Activated CD4-positive, alpha-beta T cell treated with anti-CD3 and anti-CD28 coated beads for 36 hours (primary cell): ENCODE measurements at regions of chr12 and their contacts with region 1.

Region 1: DNA sequence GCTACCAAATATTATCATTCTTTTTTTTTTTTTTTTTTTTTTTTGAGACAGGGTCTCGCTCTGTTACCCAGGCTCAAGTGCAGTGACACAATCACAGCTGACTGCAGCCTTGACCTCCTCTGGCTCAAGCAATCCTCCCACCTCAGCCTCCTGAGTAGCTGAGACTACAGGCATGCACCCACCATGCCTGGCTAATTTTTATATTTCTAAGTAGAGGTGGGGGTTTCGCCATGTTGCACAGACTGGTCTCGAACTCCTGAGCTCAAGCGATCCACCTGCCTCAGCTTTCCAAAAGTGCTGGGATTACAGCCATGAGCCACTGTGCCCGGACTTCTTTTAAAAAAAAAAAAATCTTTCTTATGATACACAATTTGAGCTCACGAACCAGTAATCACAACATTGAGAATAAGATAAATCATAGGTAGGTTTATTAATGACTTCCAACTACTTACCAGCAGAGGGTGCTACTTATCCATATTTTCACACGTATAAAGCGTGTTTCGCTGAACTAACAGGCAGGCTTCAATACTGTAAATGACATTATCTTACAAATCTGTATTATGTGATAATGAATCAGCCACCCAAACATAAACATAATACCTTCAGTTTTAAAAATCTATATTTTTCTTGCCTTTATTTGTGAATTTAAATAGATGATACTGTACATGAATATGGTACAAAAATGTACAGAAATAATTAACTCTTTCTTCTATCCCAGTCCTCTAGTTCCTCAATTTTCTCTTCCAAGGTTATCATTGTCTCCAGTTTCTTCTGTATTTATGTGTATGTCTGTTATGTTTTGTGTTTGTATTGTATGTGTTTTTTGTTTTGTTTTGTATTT is 42.5 kb upstream of the BCAT1 start:
- DNase-seq: no peak
- ATAC-seq: peak; percentile 85
- H3K4me3 Mint-ChIP-seq: no peak overlapping the region
- H3K27ac Mint-ChIP-seq: no peak overlapping the region
- H3K4me1 Mint-ChIP-seq: no peaks in the 10 kb centered on the region
- H3K27me3 Mint-ChIP-seq: no peaks in the 10 kb centered on the region

Region 2: GRCh38 chr12:24798335-24798734 is 193.1 kb before region 1 on chr12:
- CTCF ChIA-PET with region 1: no interaction called
- POLR2A ChIA-PET with region 1: no interaction called
- intact Hi-C with region 1: no loop called
- DNase-seq: no peak
- ATAC-seq: peak; percentile 27
- H3K4me3 Mint-ChIP-seq: no peak overlapping the region
- H3K27ac Mint-ChIP-seq: no peak overlapping the region
- H3K4me1 Mint-ChIP-seq: peaks cover 22% of the 10 kb centered on the region
- H3K27me3 Mint-ChIP-seq: no peaks in the 10 kb centered on the region

Region 3: GRCh38 chr12:25009496-25010092 is 18.2 kb after region 1 on chr12:
- CTCF ChIA-PET with region 1: interaction called, 10 read pairs
- POLR2A ChIA-PET with region 1: no interaction called
- intact Hi-C with region 1: no loop called
- DNase-seq: no peak
- ATAC-seq: no peak
- H3K4me3 Mint-ChIP-seq: no peak overlapping the region
- H3K27ac Mint-ChIP-seq: no peak overlapping the region
- H3K4me1 Mint-ChIP-seq: peaks cover 10% of the 10 kb centered on the region
- H3K27me3 Mint-ChIP-seq: no peaks in the 10 kb centered on the region

Region 4: DNA sequence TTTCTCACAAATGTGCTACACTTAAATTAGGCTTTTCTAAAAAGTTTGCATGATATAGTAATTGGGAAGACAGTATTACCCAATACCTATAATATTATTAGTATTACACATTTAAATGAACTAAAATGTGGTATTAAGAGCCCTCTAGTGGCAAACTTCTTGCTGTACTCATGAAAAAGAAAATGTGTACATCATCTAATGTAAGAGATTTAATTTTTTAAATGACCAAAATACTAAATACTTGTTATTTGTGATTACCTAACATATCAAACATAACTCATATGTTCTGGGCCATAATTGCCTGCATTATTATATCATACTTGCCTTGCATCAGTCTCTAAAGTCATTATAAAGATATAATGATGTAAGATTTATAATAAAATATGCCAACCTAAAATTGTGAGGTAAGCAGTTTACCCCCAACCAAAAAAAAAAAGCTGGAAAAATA is 139.3 kb after region 1 on chr12:
- CTCF ChIA-PET with region 1: interaction called, 65 read pairs
- POLR2A ChIA-PET with region 1: interaction called, 3 read pairs
- intact Hi-C with region 1: loop called (anchors 1 kb)
- DNase-seq: no peak
- ATAC-seq: no peak
- H3K4me3 Mint-ChIP-seq: no peak overlapping the region
- H3K27ac Mint-ChIP-seq: no peak overlapping the region
- H3K4me1 Mint-ChIP-seq: no peaks in the 10 kb centered on the region
- H3K27me3 Mint-ChIP-seq: no peaks in the 10 kb centered on the region